Activated CD4-positive, alpha-beta memory T cell treated with anti-CD3 and anti-CD28 coated beads for 36 hours (primary cell): ENCODE measurements at regions of chr18 and their contacts with region 1.

Region 1: DNA sequence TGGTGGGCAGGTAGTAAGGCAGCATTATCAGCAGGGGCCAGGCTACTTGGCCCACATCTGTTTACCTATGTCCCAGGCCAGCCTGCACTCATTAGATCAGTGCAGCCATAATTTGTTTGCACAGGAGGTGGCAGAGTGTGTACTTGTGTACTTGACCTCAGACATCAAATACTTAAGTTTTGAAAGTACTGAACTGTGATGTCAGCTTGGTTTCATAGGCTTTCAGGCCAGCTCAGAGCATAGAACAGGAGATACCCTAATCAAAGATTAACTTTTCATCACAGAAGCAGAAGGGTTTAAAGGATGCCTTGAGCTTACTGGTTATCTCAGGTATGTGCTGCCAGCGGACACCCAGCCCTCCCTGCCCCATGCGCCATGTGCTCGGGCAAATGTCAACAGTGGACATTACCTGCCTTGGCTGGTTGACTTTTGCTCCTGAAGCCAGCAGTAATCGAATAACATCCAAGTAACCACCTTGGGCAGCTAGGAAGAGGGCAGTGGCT is 33.2 kb downstream of the ANKRD29 start:
- DNase-seq: no peak
- H3K4me3 Mint-ChIP-seq: no peak overlapping the region
- H3K27ac Mint-ChIP-seq: no peak overlapping the region
- H3K4me1 Mint-ChIP-seq: peaks cover 8% of the 10 kb centered on the region
- H3K27me3 Mint-ChIP-seq: peaks cover 3% of the 10 kb centered on the region

Region 2: DNA sequence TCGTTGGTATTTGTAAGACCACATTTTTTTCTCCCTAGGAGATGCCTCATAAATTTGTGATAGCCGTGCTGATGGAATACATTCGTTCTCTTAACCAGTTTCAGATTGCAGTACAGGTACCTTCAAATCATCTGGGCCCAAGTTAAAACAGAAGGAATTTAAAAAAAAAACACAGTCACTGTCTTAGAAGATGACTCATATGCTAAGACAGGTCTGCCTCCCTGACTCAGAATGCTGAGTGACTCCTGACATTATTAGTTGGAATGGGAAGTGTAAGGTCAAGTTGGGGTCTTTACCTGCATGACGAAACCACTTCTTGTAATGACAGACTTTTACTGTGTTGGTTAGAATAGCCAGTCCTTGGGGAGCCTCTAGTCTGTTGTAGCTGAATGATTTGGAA is 99.9 kb before region 1 on chr18:
- CTCF ChIA-PET with region 1: no interaction called
- POLR2A ChIA-PET with region 1: no interaction called
- intact Hi-C with region 1: no loop called
- DNase-seq: no peak
- H3K4me3 Mint-ChIP-seq: no peak overlapping the region
- H3K27ac Mint-ChIP-seq: peak overlapping the region; percentile 74
- H3K4me1 Mint-ChIP-seq: peaks cover 17% of the 10 kb centered on the region
- H3K27me3 Mint-ChIP-seq: no peaks in the 10 kb centered on the region

Region 3: DNA sequence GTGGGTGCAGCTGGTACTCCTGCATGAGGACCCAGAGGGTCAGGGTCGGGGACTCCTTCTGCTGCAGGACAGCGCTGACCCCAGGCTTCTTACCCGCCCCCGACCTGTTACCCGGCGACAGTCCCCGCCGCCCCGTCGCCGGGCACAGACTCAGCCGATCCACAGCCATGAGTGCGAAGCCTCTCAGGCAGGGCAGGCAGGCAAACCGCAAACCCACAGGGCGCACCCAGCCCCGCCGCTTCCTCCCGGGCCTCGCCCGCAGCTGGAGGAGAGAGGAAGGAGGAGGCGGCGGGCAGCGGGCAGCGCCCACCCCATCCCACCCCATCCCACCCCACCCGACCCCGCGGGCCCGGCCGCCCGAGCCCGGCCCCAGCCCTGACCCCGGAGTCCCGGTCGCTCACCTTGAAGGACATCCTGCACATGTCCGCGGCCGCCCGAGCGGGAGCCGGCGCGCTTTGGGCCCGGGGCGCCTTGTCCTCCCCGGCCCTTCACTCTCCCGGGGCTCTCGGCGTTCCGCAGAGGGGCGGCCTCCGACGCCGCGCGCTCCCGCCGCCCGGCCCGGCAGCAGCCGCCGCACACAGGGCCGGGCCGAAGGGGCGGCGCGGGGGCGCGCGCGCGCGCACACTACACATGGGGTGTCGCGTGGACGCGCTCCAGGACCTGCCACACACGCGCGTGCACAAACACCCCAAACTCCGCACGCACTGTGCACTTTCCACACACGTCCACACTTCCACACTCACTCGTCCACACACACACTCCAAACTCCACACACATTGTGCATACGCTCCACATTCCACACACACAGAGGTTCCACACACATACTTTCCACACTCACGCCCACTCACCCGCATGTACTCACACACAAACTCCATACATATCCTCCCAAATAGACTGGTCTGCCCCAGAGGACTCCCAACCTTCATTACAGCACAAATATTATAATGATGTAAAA is 33.1 kb after region 1 on chr18 and contains the start of gene ANKRD29:
- CTCF ChIA-PET with region 1: no interaction called
- POLR2A ChIA-PET with region 1: no interaction called
- intact Hi-C with region 1: loop called (anchors 5 kb)
- DNase-seq: peak; percentile 76
- H3K4me3 Mint-ChIP-seq: peak within 1 kb of the TSS; percentile 80
- H3K27ac Mint-ChIP-seq: no peak within 1 kb of the TSS
- H3K4me1 Mint-ChIP-seq: peaks cover 16% of the 10 kb centered on the region
- H3K27me3 Mint-ChIP-seq: peaks cover 24% of the 10 kb centered on the region
- total RNA-seq, gene ANKRD29: not detected

Region 4: DNA sequence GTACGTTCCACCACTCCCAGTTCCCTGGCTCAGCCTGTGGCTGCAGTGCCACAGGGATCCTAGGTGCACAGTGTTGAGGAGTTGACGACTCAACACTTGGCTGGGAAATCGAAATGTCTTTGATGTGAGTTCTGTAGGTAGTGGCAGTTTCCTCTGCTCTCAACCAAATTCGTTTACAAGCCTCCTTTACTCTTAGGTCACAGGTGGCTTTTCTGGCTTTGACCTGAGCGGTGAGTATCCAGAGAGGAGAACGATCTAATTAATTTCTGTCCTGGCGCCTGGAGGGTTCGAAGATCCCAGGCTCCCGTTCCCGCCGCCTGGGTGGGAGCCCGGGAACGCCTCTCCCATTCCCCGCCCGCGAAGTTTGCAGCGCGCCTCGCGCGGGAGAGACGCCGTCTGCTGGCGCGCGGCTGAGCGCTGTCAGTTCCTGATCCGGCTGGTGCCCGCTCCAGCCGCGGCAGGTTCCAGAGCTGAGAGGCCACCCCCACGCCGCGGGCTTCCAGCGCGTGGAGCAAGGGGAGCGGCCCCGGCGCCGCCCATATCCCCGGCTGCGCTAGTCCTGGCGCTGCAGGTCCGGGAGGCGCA is 59.6 kb after region 1 on chr18 and contains the start of gene LAMA3:
- CTCF ChIA-PET with region 1: no interaction called
- POLR2A ChIA-PET with region 1: no interaction called
- intact Hi-C with region 1: loop called (anchors 5 kb)
- DNase-seq: peak; percentile 41
- H3K4me3 Mint-ChIP-seq: peak within 1 kb of the TSS; percentile 40
- H3K27ac Mint-ChIP-seq: no peak within 1 kb of the TSS
- H3K4me1 Mint-ChIP-seq: peaks cover 6% of the 10 kb centered on the region
- H3K27me3 Mint-ChIP-seq: peaks cover 36% of the 10 kb centered on the region
- total RNA-seq, gene LAMA3: 0.07 TPM in 1 of 2 experiments, not detected in the other

Region 5: DNA sequence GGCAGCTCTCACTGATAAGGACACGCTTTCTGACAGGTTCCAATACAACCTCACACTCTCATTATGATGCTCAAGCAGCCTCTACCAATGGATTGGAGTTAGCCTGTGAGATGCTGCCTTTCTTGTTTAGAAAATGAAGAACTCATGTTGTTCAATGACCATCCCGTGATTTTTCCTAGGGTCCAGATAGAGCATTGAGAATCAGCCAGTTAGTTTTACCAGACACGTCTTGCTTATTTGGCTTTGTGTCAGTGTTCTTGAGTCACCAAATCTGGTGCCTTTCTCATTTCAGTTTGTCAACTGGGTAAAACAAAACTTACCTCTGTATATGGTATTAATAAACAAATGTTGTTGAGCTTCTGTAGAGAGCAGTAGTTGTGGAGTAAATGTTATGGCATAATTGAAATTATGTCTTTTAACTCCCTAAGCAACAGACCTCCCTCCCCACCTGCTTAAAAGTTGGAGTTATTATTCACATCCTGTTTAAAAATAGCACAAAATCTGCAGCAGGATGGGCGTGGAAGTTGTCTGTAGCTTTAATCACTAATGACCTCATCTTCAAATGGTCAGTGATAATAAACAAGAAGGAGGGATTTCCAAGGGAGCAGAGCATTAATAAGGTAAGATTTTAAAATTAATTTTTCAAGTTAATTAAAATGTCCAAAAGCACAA is 998.3 kb after region 1 on chr18:
- CTCF ChIA-PET with region 1: no interaction called
- POLR2A ChIA-PET with region 1: no interaction called
- intact Hi-C with region 1: no loop called
- DNase-seq: no peak
- H3K4me3 Mint-ChIP-seq: no peak overlapping the region
- H3K27ac Mint-ChIP-seq: no peak overlapping the region
- H3K4me1 Mint-ChIP-seq: no peaks in the 10 kb centered on the region
- H3K27me3 Mint-ChIP-seq: peaks cover 6% of the 10 kb centered on the region